Activated CD4-positive, alpha-beta memory T cell treated with anti-CD3 and anti-CD28 coated beads for 36 hours (primary cell): ENCODE measurements at regions of chr6 and their contacts with region 1.

Region 1: DNA sequence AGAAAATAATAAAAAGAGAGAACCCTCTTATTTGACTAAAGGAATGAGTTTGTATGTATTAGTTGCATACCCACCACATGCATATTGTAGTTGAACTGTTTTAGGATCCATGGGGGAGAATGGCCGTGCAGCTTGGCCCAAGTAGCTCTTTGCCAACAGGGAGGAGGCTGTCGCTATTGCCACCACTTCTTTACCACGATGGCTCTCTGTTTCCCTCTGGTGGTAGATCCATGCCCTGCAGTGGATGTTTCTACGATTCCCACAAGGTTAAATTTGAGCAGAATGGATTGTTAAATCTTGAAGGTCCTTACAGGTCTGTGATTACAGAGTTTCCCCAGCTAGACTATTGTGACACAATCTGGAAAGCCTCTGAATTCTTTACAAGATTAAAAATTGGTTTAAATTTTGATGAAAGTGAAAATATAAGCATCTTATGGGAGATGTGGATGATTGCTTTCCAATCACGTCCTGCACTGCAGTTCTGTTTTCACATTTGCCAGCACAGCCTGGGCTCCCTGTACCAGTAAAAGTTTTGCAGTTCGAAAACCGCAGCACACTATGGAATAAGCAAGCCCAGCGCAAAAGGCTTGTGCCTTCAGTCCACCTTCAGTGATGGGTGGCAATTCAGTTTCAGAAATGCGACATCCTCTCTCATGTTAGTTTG is 34.4 kb upstream of the FNDC1 start:
- DNase-seq: peak; percentile 85
- H3K4me3 Mint-ChIP-seq: no peak overlapping the region
- H3K27ac Mint-ChIP-seq: no peak overlapping the region
- H3K4me1 Mint-ChIP-seq: no peaks in the 10 kb centered on the region
- H3K27me3 Mint-ChIP-seq: peaks cover 7% of the 10 kb centered on the region

Region 2: GRCh38 chr6:159033160-159034049 is 101.4 kb before region 1 on chr6:
- CTCF ChIA-PET with region 1: interaction called, 11 read pairs
- POLR2A ChIA-PET with region 1: no interaction called
- intact Hi-C with region 1: no loop called
- DNase-seq: no peak
- H3K4me3 Mint-ChIP-seq: no peak overlapping the region
- H3K27ac Mint-ChIP-seq: no peak overlapping the region
- H3K4me1 Mint-ChIP-seq: peaks cover 43% of the 10 kb centered on the region
- H3K27me3 Mint-ChIP-seq: no peaks in the 10 kb centered on the region

Region 3: GRCh38 chr6:159110013-159110412 is 24.8 kb before region 1 on chr6:
- CTCF ChIA-PET with region 1: interaction called, 111 read pairs
- POLR2A ChIA-PET with region 1: no interaction called
- intact Hi-C with region 1: loop called (anchors 1 kb)
- DNase-seq: peak; percentile 62
- H3K4me3 Mint-ChIP-seq: no peak overlapping the region
- H3K27ac Mint-ChIP-seq: peak overlapping the region; percentile 19
- H3K4me1 Mint-ChIP-seq: peaks cover 52% of the 10 kb centered on the region
- H3K27me3 Mint-ChIP-seq: no peaks in the 10 kb centered on the region

Region 4: GRCh38 chr6:160534050-160534696 is 1399.3 kb after region 1 on chr6:
- CTCF ChIA-PET with region 1: no interaction called
- POLR2A ChIA-PET with region 1: no interaction called
- intact Hi-C with region 1: no loop called
- DNase-seq: peak; percentile 69
- H3K4me3 Mint-ChIP-seq: no peak overlapping the region
- H3K27ac Mint-ChIP-seq: no peak overlapping the region
- H3K4me1 Mint-ChIP-seq: no peaks in the 10 kb centered on the region
- H3K27me3 Mint-ChIP-seq: no peaks in the 10 kb centered on the region